CD4-positive, alpha-beta T cell (primary cell): ENCODE measurements at regions of chr16 and their contacts with region 1.

Region 1: GRCh38 chr16:31868691-31869167 is 4.9 kb upstream of the ZNF267 start:
- DNase-seq: peak; percentile 68 to 88 (median 77)
- ATAC-seq: peak; percentile 35
- H3K4me3 ChIP-seq: peak overlapping the region; percentile 42
- H3K4me3 Mint-ChIP-seq: peak overlapping the region; percentile 78
- H3K27ac ChIP-seq: peak overlapping the region; percentile 49 to 92
- H3K27ac Mint-ChIP-seq: peak overlapping the region; percentile 74
- H3K4me1 ChIP-seq: peaks cover 43% of the 10 kb centered on the region
- H3K4me1 Mint-ChIP-seq: peaks cover 39% of the 10 kb centered on the region
- H3K27me3 ChIP-seq: no peaks in the 10 kb centered on the region
- H3K27me3 Mint-ChIP-seq: no peaks in the 10 kb centered on the region
- CTCF ChIP-seq: peak; percentile 94

Region 2: DNA sequence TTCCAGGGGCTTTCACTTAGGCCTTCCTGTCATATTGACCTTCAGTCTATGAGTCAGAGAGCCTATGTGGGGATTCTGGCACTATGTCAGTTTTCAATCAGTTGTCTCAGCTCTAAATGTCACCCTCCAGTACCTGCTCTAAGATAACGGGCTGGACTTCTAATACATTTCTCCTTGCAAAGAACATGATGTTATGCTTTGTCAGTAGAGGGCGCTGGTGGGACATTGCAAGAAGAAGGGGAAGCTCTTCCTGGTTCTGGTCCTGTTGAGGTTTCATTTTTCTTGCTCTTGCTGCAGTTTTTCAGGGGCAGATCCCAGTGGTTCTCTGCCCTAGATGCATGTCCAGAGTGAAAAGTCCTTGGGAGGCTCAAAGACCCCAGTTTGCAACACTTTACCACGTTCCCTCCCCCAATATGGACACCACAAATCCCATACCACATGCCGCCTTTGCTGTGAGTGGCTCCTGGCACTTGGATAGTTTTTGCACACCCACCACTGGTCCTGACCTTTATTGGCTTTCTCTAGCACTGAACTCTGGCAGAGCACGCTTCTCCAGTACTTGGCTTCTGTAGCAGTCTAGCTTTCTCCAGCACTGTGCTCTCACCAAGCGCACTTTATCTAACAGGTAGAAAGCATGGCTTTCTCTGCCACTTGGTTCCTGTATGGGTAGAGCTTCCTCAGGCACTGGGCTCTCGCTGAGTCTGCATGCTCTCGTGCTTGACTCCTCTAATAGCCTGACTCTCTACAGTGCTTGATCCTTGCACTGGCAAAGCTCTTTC is 1023.9 kb before region 1 on chr16:
- CTCF ChIA-PET with region 1: no interaction called
- POLR2A ChIA-PET with region 1: no interaction called
- intact Hi-C with region 1: loop called in 1 of 2 experiments (anchors 10 kb)
- DNase-seq: peak; percentile 52 to 93 (median 79)
- ATAC-seq: peak; percentile 96
- H3K4me3 ChIP-seq: no peak overlapping the region
- H3K4me3 Mint-ChIP-seq: peak overlapping the region; percentile 52
- H3K27ac ChIP-seq: no peak overlapping the region
- H3K27ac Mint-ChIP-seq: peak overlapping the region; percentile 24
- H3K4me1 ChIP-seq: peaks cover 8% of the 10 kb centered on the region
- H3K4me1 Mint-ChIP-seq: peaks cover 11% of the 10 kb centered on the region
- H3K27me3 ChIP-seq: no peaks in the 10 kb centered on the region
- H3K27me3 Mint-ChIP-seq: no peaks in the 10 kb centered on the region
- CTCF ChIP-seq: peak; percentile 91

Region 3: DNA sequence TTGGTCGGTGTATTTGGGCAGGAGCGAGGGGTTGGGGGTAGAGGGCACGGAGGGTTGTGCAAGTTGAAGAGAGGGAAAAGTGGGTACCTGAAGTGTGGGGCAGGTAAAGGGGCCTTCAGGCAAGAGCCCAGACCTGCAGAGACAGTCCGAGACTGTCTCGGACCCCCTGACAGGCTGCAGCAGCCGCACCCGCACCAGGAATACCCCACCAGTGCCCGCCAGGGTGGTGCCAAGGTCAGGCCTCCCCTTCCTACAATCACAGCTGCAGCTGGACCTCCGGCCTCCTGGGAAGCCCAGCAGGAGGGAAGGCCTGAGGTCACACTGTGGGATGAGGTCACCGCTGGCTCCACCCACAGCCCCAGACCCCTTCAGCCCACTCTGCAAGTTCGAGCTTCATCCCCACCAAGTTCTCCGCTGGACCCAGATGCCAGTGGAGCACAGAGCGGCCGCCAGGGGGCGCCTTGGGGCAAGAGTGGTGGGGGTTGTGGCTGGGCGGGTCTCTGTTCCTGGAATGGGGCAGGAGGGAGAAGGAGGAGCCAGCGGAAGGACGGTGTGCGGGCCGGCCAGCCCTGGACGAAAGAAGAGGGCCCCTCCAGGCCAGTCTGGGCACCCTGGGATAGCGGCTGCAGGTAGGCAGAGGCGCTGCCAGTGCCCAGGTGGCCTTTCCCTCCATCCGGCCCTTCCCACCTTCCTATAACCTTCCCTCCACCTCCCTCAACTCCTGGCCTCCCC is 883.9 kb before region 1 on chr16 and contains the start of gene HSD3B7:
- CTCF ChIA-PET with region 1: interaction called, 4 read pairs
- POLR2A ChIA-PET with region 1: interaction called, 3 read pairs
- intact Hi-C with region 1: loop called (anchors 1 kb)
- DNase-seq: peak; percentile 64 to 87 (median 78)
- ATAC-seq: peak; percentile 74
- H3K4me3 ChIP-seq: no peak within 1 kb of the TSS
- H3K4me3 Mint-ChIP-seq: no peak within 1 kb of the TSS
- H3K27ac ChIP-seq: no peak within 1 kb of the TSS
- H3K27ac Mint-ChIP-seq: no peak within 1 kb of the TSS
- H3K4me1 ChIP-seq: peaks cover 13% of the 10 kb centered on the region
- H3K4me1 Mint-ChIP-seq: no peaks in the 10 kb centered on the region
- H3K27me3 ChIP-seq: no peaks in the 10 kb centered on the region
- H3K27me3 Mint-ChIP-seq: no peaks in the 10 kb centered on the region
- CTCF ChIP-seq: peak; percentile 85
- total RNA-seq, gene HSD3B7: 0.11 TPM in 1 of 2 experiments, not detected in the other

Region 4: GRCh38 chr16:31117391-31118197 is 751.1 kb before region 1 on chr16 and contains the start of gene KAT8:
- CTCF ChIA-PET with region 1: no interaction called
- POLR2A ChIA-PET with region 1: interaction called, 10 read pairs
- intact Hi-C with region 1: no loop called
- DNase-seq: peak; percentile 93 to 99 (median 96)
- ATAC-seq: peak; percentile 91
- H3K4me3 ChIP-seq: peak within 1 kb of the TSS; percentile 68
- H3K4me3 Mint-ChIP-seq: peak within 1 kb of the TSS; percentile 88
- H3K27ac ChIP-seq: peak within 1 kb of the TSS; percentile 87 to 95
- H3K27ac Mint-ChIP-seq: peak within 1 kb of the TSS; percentile 83
- H3K4me1 ChIP-seq: peaks cover 23% of the 10 kb centered on the region
- H3K4me1 Mint-ChIP-seq: peaks cover 17% of the 10 kb centered on the region
- H3K27me3 ChIP-seq: no peaks in the 10 kb centered on the region
- H3K27me3 Mint-ChIP-seq: no peaks in the 10 kb centered on the region
- CTCF ChIP-seq: no peak
- total RNA-seq, gene KAT8: 114 to 124 TPM

Region 5: DNA sequence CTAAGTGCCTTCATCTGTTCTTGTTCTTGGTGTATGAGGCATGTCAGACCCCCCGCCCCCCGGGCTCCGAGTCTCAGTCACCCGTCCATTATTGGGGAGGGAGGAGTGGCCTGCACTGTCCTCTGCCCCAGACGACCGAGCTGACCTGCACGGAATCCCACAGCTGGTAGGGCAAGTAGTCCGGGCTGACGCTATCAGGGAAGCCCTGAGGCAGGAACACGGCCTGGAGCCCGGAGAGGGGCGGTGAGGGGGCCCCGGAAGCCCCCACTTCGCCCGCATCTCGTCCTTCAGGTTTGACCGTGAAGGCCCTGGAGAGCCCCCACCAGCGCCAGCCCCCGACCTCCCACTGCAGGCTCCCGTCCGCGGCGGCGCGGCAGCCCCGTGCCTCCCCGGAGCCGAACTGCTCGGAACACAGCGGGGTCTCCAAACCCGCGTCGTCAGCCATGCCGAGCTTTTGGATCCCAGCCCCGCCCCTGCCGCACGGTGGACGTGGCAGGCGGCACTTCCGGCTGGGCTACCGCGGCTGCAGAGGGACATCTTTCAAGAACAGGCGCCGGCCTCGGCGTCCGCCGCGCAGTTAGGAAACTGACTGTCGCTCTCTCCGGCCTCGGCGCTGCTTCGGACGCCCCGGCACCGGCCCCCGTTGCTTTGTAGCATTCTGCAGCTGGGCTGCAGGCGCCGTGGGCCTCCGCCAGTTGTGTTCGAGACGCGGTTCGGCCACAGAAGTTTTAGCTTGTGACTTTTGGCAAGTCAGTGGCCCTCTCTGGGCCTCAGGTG is 360.6 kb before region 1 on chr16 and contains the start of gene RUSF1:
- CTCF ChIA-PET with region 1: no interaction called
- POLR2A ChIA-PET with region 1: interaction called, 12 read pairs
- intact Hi-C with region 1: loop called in 1 of 2 experiments (anchors 5 kb)
- DNase-seq: peak; percentile 65 to 89 (median 80)
- ATAC-seq: peak; percentile 87
- H3K4me3 ChIP-seq: peak within 1 kb of the TSS; percentile 97
- H3K4me3 Mint-ChIP-seq: peak within 1 kb of the TSS; percentile 94
- H3K27ac ChIP-seq: peak within 1 kb of the TSS; percentile 79 to 87
- H3K27ac Mint-ChIP-seq: peak within 1 kb of the TSS; percentile 98
- H3K4me1 ChIP-seq: peaks cover 40% of the 10 kb centered on the region
- H3K4me1 Mint-ChIP-seq: peaks cover 58% of the 10 kb centered on the region
- H3K27me3 ChIP-seq: no peaks in the 10 kb centered on the region
- H3K27me3 Mint-ChIP-seq: no peaks in the 10 kb centered on the region
- CTCF ChIP-seq: no peak
- total RNA-seq, gene RUSF1: 69.2 to 73.2 TPM

Region 6: GRCh38 chr16:31713071-31713944 is 155.4 kb before region 1 on chr16:
- CTCF ChIA-PET with region 1: no interaction called
- POLR2A ChIA-PET with region 1: interaction called, 16 read pairs
- intact Hi-C with region 1: loop called in 1 of 2 experiments (anchors 5 kb)
- DNase-seq: peak; percentile 81 to 94 (median 88)
- ATAC-seq: peak; percentile 82
- H3K4me3 ChIP-seq: peak overlapping the region; percentile 93
- H3K4me3 Mint-ChIP-seq: peak overlapping the region; percentile 100
- H3K27ac ChIP-seq: peak overlapping the region; percentile 83 to 87
- H3K27ac Mint-ChIP-seq: peak overlapping the region; percentile 96
- H3K4me1 ChIP-seq: peaks cover 33% of the 10 kb centered on the region
- H3K4me1 Mint-ChIP-seq: peaks cover 80% of the 10 kb centered on the region
- H3K27me3 ChIP-seq: no peaks in the 10 kb centered on the region
- H3K27me3 Mint-ChIP-seq: no peaks in the 10 kb centered on the region
- CTCF ChIP-seq: no peak

Region 7: GRCh38 chr16:31833047-31833446 is 35.7 kb before region 1 on chr16:
- CTCF ChIA-PET with region 1: no interaction called
- POLR2A ChIA-PET with region 1: no interaction called
- intact Hi-C with region 1: no loop called
- DNase-seq: no peak
- ATAC-seq: no peak
- H3K4me3 ChIP-seq: no peak overlapping the region
- H3K4me3 Mint-ChIP-seq: no peak overlapping the region
- H3K27ac ChIP-seq: no peak overlapping the region
- H3K27ac Mint-ChIP-seq: no peak overlapping the region
- H3K4me1 ChIP-seq: no peaks in the 10 kb centered on the region
- H3K4me1 Mint-ChIP-seq: no peaks in the 10 kb centered on the region
- H3K27me3 ChIP-seq: peaks cover 0 to 3% of the 10 kb centered on the region in 2 experiments
- H3K27me3 Mint-ChIP-seq: peaks cover 13% of the 10 kb centered on the region
- CTCF ChIP-seq: no peak